ENCODE measurements at regions of chr9 and their contacts with region 1.

Region 1: GRCh38 chr9:76445976-76446375 is 13.0 kb upstream of the GCNT1 start:
- DNase-seq: no peak
- H3K4me3 ChIP-seq: no peak overlapping the region
- H3K27ac ChIP-seq: no peak overlapping the region
- H3K4me1 ChIP-seq: no peaks in the 10 kb centered on the region
- H3K27me3 ChIP-seq: no peaks in the 10 kb centered on the region
- CTCF ChIP-seq: no peak
- POLR2A ChIP-seq: no peak

Region 2: GRCh38 chr9:76651119-76651705 is 205.2 kb after region 1 on chr9:
- intact Hi-C with region 1: loop called in 1 of 2 experiments (anchors 5 kb)
- DNase-seq: no peak
- H3K4me3 ChIP-seq: peak overlapping the region in 1 of 4 donors; percentile 30
- H3K27ac ChIP-seq: peak overlapping the region in 2 of 5 donors; percentile 18 to 57
- H3K4me1 ChIP-seq: no peaks in the 10 kb centered on the region
- H3K27me3 ChIP-seq: no peaks in the 10 kb centered on the region
- CTCF ChIP-seq: no peak
- POLR2A ChIP-seq: no peak

Region 3: DNA sequence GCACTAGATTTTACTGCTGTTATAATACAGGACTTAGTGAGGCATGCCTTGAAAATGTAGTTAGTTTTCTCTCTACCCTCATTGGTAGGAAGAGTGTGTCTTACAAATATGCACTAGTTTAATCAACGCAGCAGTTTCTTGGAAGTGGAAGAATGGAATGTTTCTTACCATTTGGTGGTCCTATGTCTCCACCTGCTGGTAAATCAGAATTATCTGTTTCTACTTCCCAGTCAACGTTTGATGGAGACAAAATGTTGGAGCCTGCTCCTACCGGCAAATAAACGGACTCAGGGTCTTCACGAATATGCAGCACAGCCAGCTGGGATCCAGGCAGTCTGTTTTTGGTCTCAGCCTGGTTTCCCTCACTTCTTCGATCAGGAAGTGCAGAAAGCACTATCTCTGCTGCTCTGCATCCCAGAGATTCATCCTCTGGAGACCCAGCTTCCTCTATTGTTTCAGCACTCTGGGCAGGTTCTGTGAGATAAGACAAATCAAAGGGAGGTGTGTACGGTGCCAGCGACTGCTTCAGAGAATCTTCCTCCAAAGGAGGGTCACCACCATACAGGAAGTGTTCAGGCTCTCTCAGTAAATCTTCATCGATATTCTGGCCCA is 258.7 kb after region 1 on chr9:
- intact Hi-C with region 1: loop called (anchors 2 to 5 kb)
- DNase-seq: peak in 3 of 7 donors; percentile 14 to 37 (median 37)
- H3K4me3 ChIP-seq: no peak overlapping the region
- H3K27ac ChIP-seq: no peak overlapping the region
- H3K4me1 ChIP-seq: peaks cover 0 to 3% of the 10 kb centered on the region in 2 donors
- H3K27me3 ChIP-seq: no peaks in the 10 kb centered on the region
- CTCF ChIP-seq: peak; percentile 50 to 88 (median 78)
- POLR2A ChIP-seq: no peak

Measured in adrenal gland (tissue), 19 donors.